ENCODE measurements at regions of chr6 and their contacts with region 1.

Region 1: DNA sequence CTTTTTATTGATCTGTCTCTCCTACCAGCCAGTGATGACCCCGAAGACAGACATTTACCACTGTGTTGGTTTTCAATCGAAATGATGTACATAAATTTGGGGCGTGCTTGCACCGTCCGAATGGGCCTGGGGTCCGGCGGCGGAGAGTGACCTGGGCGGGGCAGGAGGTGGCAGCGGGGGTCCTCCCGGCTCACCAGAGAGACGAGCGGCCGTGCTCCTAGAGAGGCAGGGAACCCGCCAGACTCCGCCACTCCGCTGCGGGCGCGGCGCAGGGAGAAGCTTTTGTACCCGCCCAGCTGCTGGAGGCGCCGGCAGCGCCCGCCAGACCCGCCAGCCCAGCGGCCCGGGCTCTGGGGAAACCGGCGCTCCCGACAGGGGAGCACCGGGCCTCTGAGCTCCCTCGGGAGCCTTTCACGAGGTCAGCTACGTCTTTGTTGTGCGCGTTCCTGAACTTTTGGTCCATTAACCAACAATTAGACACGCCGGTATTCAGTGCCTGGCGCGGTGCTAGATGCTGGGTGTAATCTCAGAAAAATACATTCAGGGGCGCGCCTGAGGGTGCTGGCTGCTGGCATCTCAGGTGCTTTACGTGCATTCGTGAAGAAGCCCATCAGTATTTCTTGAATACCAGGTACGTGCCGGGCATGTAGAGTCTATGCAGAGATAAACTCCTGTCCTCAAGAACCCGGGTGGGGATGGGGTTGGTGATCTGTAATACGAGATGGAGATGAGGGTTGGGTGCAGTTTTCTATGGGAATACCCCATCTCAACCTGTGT is at the start of gene PGBD1:
- DNase-seq: peak; percentile 52
- ATAC-seq: peak; percentile 86
- H3K4me3 Mint-ChIP-seq: peak within 1 kb of the TSS; percentile 84
- H3K27ac Mint-ChIP-seq: no peak within 1 kb of the TSS
- H3K4me1 Mint-ChIP-seq: peaks cover 12% of the 10 kb centered on the region
- H3K27me3 Mint-ChIP-seq: peaks cover 15% of the 10 kb centered on the region
- CTCF ChIP-seq: no peak
- total RNA-seq, gene PGBD1: 1.8 and 1.9 TPM in 2 replicates

Region 2: GRCh38 chr6:28225056-28225834 is 56.2 kb before region 1 on chr6 and contains the start of gene ZSCAN9:
- CTCF ChIA-PET with region 1: no interaction called
- POLR2A ChIA-PET with region 1: interaction called, 3 read pairs
- intact Hi-C with region 1: loop called (anchors 1 kb)
- DNase-seq: peak; percentile 52
- ATAC-seq: peak; percentile 89
- H3K4me3 Mint-ChIP-seq: peak within 1 kb of the TSS; percentile 88
- H3K27ac Mint-ChIP-seq: peak within 1 kb of the TSS; percentile 68
- H3K4me1 Mint-ChIP-seq: peaks cover 21% of the 10 kb centered on the region
- H3K27me3 Mint-ChIP-seq: peaks cover 21% of the 10 kb centered on the region
- CTCF ChIP-seq: no peak
- total RNA-seq, gene ZSCAN9: 25.9 and 30.3 TPM in 2 replicates

Region 3: GRCh38 chr6:28252009-28252975 is 29.2 kb before region 1 on chr6 and contains the start of gene ZKSCAN4:
- CTCF ChIA-PET with region 1: no interaction called
- POLR2A ChIA-PET with region 1: no interaction called
- intact Hi-C with region 1: loop called (anchors 1 kb)
- DNase-seq: peak; percentile 57
- ATAC-seq: peak; percentile 90
- H3K4me3 Mint-ChIP-seq: peak within 1 kb of the TSS; percentile 95
- H3K27ac Mint-ChIP-seq: peak within 1 kb of the TSS; percentile 80
- H3K4me1 Mint-ChIP-seq: peaks cover 30% of the 10 kb centered on the region
- H3K27me3 Mint-ChIP-seq: peaks cover 2% of the 10 kb centered on the region
- CTCF ChIP-seq: no peak
- total RNA-seq, gene ZKSCAN4: 10.5 and 11.1 TPM in 2 replicates

Region 4: GRCh38 chr6:28335564-28336283 is 54.2 kb after region 1 on chr6 and contains the start of gene ZSCAN31:
- CTCF ChIA-PET with region 1: no interaction called
- POLR2A ChIA-PET with region 1: interaction called, 5 read pairs
- intact Hi-C with region 1: loop called (anchors 2 kb)
- DNase-seq: peak; percentile 61
- ATAC-seq: peak; percentile 93
- H3K4me3 Mint-ChIP-seq: no peak within 1 kb of the TSS
- H3K27ac Mint-ChIP-seq: no peak within 1 kb of the TSS
- H3K4me1 Mint-ChIP-seq: no peaks in the 10 kb centered on the region
- H3K27me3 Mint-ChIP-seq: no peaks in the 10 kb centered on the region
- CTCF ChIP-seq: no peak
- total RNA-seq, gene ZSCAN31: 1.0 and 3.6 TPM in 2 replicates

Region 5: DNA sequence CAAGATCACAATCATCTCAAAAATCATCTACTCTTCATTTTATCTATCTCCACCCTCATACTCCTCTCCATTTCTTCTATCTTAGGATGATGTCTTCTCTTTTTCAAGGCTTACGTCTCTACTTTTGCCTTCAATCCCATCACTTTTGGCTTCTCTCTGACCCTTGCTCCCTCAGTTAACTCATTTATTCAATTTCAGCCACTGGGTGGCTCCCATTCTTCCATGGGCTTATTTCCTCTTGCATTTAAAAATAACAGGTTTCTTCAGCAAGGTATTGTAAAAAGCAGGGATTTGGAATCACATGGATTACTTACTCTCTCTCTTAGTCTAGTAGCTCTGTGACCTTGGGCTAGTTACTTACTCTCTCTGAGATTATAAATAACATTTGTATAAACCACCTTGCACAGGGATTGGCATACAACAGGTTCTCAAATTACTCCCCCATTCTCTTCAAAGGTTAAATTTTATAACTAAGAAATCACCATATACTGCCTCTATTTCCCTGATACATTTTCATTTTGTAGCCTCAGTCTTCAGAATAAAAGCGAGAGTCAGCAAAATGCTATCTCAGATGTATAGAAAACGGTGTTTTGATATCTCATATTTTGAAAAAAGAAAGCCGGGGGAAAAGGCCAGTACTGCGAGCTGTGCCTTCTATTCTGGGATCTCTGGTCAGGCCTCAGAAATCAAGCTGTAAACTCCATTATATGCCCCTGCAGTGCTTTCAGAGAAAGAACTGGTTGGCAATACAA is 112.6 kb after region 1 on chr6:
- CTCF ChIA-PET with region 1: no interaction called
- POLR2A ChIA-PET with region 1: no interaction called
- intact Hi-C with region 1: no loop called
- DNase-seq: no peak
- ATAC-seq: no peak
- H3K4me3 Mint-ChIP-seq: no peak overlapping the region
- H3K27ac Mint-ChIP-seq: no peak overlapping the region
- H3K4me1 Mint-ChIP-seq: peaks cover 39% of the 10 kb centered on the region
- H3K27me3 Mint-ChIP-seq: no peaks in the 10 kb centered on the region
- CTCF ChIP-seq: no peak

Region 6: DNA sequence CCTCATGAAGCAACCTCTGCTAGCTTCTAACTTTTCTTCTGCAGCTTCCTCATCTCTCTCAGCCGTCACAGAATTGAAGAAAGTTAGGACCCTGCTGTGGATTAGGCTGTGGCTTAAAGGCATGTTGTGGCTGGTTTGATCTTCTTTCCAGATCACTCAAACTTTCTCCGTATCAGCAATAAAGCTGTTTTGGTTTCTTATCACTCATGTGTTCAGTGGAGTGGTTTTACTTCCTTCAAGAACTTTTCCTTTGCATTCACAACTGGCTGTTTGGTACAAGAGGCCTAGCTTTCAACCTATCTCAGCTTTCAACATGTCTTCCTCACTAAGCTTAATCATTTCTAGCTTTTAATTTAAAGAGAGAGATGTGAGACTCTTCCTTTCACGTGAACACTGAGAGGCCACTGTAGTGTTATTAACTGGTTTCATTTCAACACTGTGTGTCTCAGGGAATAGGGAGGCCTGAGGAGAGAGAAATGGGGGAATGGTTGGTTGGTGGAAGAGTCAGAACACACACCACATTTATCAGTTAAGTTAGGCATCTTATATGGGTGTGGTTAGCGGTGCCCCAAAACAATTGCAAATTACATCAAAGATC is 144.6 kb after region 1 on chr6:
- CTCF ChIA-PET with region 1: no interaction called
- POLR2A ChIA-PET with region 1: no interaction called
- intact Hi-C with region 1: no loop called
- DNase-seq: no peak
- ATAC-seq: no peak
- H3K4me3 Mint-ChIP-seq: no peak overlapping the region
- H3K27ac Mint-ChIP-seq: no peak overlapping the region
- H3K4me1 Mint-ChIP-seq: no peaks in the 10 kb centered on the region
- H3K27me3 Mint-ChIP-seq: peaks cover 17% of the 10 kb centered on the region
- CTCF ChIP-seq: no peak

Region 7: DNA sequence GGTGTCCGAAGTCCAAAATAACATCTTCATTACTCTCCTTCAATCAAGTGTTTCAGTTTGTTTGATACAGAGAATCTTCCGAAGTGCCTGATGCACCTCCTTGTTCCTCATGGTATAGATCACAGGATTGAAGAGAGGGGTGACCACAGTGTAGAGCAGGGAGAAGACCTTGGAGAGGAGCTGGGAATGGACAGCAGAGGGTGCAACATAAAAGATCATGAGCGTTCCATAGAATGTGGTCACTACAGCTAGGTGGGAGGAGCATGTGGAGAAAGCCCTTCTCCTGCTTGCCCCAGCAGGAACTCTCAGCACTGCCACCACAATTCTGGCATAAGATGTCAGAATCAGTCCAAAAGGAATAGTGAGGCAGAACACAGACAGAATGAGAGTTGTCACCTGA is 1145.2 kb after region 1 on chr6:
- CTCF ChIA-PET with region 1: no interaction called
- POLR2A ChIA-PET with region 1: no interaction called
- intact Hi-C with region 1: no loop called
- DNase-seq: no peak
- ATAC-seq: no peak
- H3K4me3 Mint-ChIP-seq: no peak overlapping the region
- H3K27ac Mint-ChIP-seq: no peak overlapping the region
- H3K4me1 Mint-ChIP-seq: no peaks in the 10 kb centered on the region
- H3K27me3 Mint-ChIP-seq: peaks cover 11% of the 10 kb centered on the region
- CTCF ChIP-seq: no peak

Measured in activated B cell treated with CpG ODN at 0.5 μM for 24 hours (primary cell).